ENCODE measurements at regions of chr1 and their contacts with region 1.

Region 1: GRCh38 chr1:93304716-93305138 is 41.0 kb upstream of the DR1 start:
- DNase-seq: peak; percentile 23
- H3K4me3 ChIP-seq: no peak overlapping the region
- CTCF ChIP-seq: peak; percentile 56

Region 2: GRCh38 chr1:93078986-93079654 is 225.6 kb before region 1 on chr1 and contains the start of gene MTF2:
- CTCF ChIA-PET with region 1: interaction called, 23 read pairs
- POLR2A ChIA-PET with region 1: interaction called, 3 read pairs
- DNase-seq: peak; percentile 86
- H3K4me3 ChIP-seq: peak within 1 kb of the TSS; percentile 97
- CTCF ChIP-seq: no peak

Region 3: DNA sequence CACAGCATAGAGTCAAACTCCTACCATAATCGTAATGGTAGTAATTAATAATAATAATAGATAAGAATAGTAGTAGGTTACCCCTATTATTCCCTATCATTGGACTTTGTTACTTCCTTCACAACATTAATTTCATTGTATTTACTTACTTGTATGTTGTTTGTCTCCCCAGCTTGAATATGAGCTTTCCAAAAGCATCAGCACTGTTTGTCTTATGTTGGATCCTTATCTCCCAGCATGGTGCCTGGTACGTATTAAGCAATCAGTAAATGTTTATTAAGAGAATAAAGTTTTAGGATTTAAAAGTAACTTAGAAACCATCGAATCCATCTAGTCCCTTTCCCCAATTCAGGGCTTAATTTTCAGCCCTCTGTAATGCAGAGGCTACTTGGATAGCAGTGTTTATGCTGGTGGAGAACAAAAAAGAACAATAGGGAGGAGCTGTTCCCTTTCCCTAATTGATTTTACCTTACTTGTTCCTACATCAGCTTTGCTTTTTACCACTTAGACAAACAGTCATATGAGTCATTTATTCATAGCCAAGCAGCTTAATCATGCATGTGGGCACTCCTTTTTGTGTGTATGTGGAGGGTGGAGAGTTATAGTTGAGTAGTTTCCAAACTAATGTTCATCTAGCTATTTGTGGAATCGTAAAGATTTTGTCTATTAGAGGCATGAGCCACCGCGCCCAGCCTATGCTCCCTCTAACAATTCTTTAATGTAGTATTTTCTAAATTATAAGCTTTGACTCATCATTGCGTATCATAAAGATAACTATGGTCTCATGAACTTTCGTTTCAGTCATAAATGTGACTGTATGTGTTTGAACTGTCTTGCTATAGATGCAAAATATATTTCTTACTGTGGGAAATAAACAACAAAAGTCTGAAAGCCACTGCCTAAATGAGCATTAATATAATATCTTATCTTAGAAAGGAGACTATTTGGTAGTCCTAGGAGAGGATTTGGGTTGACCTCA is 20.0 kb after region 1 on chr1:
- CTCF ChIA-PET with region 1: interaction called, 83 read pairs
- POLR2A ChIA-PET with region 1: no interaction called
- DNase-seq: peak; percentile 74
- H3K4me3 ChIP-seq: no peak overlapping the region
- CTCF ChIP-seq: no peak

Region 4: GRCh38 chr1:93353286-93353685 is 48.6 kb after region 1 on chr1:
- CTCF ChIA-PET with region 1: interaction called, 20 read pairs
- POLR2A ChIA-PET with region 1: no interaction called
- DNase-seq: no peak
- H3K4me3 ChIP-seq: no peak overlapping the region
- CTCF ChIP-seq: no peak

Region 5: GRCh38 chr1:93426181-93426580 is 121.5 kb after region 1 on chr1:
- CTCF ChIA-PET with region 1: interaction called, 11 read pairs
- POLR2A ChIA-PET with region 1: no interaction called
- DNase-seq: no peak
- H3K4me3 ChIP-seq: no peak overlapping the region
- CTCF ChIP-seq: no peak

Region 6: DNA sequence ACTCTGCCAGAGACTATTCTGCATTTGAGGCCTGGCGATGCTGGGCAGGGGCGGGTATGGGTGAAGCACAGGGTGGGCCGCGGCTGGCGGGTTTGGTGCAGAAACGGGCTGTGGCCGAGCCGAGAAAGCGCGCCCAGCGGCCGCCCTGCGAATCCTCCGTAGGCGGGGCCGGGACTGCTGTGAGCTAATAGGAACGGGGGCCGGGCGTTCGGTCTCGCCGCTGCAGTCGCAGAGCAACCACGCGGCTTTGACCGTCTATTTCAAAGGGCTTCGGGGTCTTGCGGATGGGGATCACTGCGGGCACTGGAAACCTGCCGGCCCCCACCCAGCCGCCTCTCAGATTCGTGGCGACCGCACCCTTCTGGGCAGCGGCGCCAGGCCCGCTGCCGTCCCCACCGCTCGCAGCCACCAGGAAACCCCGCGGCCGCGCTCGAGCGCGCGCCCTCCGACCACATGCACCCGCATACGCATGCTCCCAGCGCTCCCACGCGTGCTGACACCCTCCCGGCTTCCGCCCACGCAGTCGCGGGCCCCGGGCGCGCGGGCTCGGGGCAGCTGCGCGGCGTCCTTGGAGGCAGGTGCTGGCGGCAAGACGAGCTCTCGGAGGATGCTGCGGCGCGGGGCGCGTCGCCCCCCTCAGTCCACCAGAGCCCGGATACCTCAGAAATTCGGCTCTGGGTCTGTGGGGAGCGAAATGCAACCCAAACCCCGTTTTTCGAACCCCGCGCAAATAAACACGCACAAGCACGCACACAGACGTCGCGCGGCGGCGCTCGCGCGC is 541.7 kb after region 1 on chr1:
- CTCF ChIA-PET with region 1: interaction called, 29 read pairs
- POLR2A ChIA-PET with region 1: interaction called, 3 read pairs
- DNase-seq: no peak
- H3K4me3 ChIP-seq: peak overlapping the region; percentile 83
- CTCF ChIP-seq: peak; percentile 57